Left cardiac atrium (tissue), 4 donors: ENCODE measurements at regions of chr5 and their contacts with region 1.

Region 1: GRCh38 chr5:79857714-79858409 is 133.2 kb downstream of the MTX3 start:
- DNase-seq: peak; percentile 69
- ATAC-seq: peak; percentile 62 to 66

Region 2: DNA sequence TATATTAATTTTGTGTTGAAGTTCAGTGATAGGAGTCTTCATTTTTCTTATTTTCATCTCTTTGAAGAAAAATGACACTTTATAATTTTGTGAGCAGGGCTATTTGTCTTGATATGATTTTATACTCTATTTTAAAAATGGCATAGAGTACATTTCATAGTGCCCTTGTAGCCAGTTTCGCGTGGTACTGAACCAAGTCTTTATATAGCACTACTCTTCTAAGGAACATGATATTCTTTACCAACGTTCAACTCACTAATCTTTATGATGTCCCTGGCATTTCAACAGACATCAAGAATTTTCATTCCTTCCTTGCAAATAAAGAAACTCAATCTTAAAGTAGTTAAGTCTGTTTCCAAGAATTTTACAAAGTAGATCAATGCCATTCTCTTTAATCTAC is 302.4 kb before region 1 on chr5:
- intact Hi-C with region 1: loop called in 1 of 2 experiments (anchors 2 kb)
- DNase-seq: no peak
- ATAC-seq: no peak

Region 3: DNA sequence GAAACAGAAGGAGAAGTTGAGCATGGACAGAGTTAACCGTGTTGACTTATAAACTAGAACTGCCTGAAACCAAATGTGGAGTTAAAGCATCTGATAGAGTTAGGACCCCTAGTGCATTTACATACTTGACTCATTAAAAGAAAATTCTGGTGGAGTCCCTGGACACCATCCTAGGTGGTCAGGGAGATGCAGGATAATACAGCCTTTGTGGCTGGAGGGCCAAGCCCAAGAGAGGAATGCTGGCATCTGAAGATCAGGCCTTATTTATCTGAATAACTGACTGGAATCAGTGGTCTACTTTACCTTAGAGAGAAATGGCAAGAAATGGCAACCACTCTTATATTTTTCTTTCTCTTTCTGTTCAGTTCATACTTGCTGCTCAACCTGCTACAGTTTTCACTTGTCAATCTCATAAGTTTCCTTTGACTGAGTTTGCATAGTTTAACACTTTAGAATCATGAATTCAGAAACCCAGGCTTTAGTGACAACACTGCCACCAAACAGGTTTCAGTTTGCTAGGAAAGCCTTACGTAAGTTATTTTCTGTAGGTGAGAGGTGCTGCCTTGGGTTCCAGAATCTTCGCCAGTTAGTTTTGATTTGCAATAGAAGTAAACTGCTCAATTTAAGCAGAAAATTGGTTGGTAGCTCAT is 158.0 kb before region 1 on chr5:
- intact Hi-C with region 1: loop called in 1 of 2 experiments (anchors 5 kb)
- DNase-seq: no peak
- ATAC-seq: no peak